ENCODE measurements at regions of chr7 and their contacts with region 1.

Region 1: GRCh38 chr7:100101016-100101862 is at the starts of genes AP4M1 and MCM7:
- DNase-seq: peak; percentile 84 to 98 (median 93)
- ATAC-seq: peak; percentile 90
- H3K4me3 ChIP-seq: peak within 1 kb of the TSS; percentile 98
- H3K4me3 Mint-ChIP-seq: peak within 1 kb of the TSS; percentile 85 to 95 (median 93)
- H3K27ac ChIP-seq: peak within 1 kb of the TSS; percentile 91
- H3K27ac Mint-ChIP-seq: peak within 1 kb of the TSS; percentile 90 to 98 (median 96)
- H3K4me1 ChIP-seq: peaks cover 17 to 25% of the 10 kb centered on the region in 2 donors
- H3K4me1 Mint-ChIP-seq: peaks cover 27 to 47% (median 41%) of the 10 kb centered on the region in 7 donors
- H3K27me3 ChIP-seq: no peaks in the 10 kb centered on the region
- H3K27me3 Mint-ChIP-seq: no peaks in the 10 kb centered on the region
- total RNA-seq, gene AP4M1: 7.5 to 13.8 (median 11.0) TPM
- total RNA-seq, gene MCM7: 80.3 to 263 (median 168) TPM

Region 2: GRCh38 chr7:99438573-99439480 is 662.4 kb before region 1 on chr7 and contains the starts of genes CPSF4 and PTCD1:
- CTCF ChIA-PET with region 1: no interaction called
- POLR2A ChIA-PET with region 1: no interaction called
- intact Hi-C with region 1: loop called in 1 of 2 experiments (anchors 1 kb)
- DNase-seq: peak; percentile 71 to 92 (median 77)
- ATAC-seq: peak; percentile 95
- H3K4me3 ChIP-seq: peak within 1 kb of the TSS; percentile 93
- H3K4me3 Mint-ChIP-seq: peak within 1 kb of the TSS; percentile 92 to 100 (median 98)
- H3K27ac ChIP-seq: peak within 1 kb of the TSS; percentile 81
- H3K27ac Mint-ChIP-seq: peak within 1 kb of the TSS; percentile 85 to 95 (median 94)
- H3K4me1 ChIP-seq: peaks cover 10 to 11% of the 10 kb centered on the region in 2 donors
- H3K4me1 Mint-ChIP-seq: peaks cover 18 to 40% (median 31%) of the 10 kb centered on the region in 7 donors
- H3K27me3 ChIP-seq: no peaks in the 10 kb centered on the region
- H3K27me3 Mint-ChIP-seq: no peaks in the 10 kb centered on the region
- total RNA-seq, gene CPSF4: 36.3 to 69.4 (median 45.7) TPM
- total RNA-seq, gene PTCD1: 4.0 to 10.8 (median 8.8) TPM

Region 3: DNA sequence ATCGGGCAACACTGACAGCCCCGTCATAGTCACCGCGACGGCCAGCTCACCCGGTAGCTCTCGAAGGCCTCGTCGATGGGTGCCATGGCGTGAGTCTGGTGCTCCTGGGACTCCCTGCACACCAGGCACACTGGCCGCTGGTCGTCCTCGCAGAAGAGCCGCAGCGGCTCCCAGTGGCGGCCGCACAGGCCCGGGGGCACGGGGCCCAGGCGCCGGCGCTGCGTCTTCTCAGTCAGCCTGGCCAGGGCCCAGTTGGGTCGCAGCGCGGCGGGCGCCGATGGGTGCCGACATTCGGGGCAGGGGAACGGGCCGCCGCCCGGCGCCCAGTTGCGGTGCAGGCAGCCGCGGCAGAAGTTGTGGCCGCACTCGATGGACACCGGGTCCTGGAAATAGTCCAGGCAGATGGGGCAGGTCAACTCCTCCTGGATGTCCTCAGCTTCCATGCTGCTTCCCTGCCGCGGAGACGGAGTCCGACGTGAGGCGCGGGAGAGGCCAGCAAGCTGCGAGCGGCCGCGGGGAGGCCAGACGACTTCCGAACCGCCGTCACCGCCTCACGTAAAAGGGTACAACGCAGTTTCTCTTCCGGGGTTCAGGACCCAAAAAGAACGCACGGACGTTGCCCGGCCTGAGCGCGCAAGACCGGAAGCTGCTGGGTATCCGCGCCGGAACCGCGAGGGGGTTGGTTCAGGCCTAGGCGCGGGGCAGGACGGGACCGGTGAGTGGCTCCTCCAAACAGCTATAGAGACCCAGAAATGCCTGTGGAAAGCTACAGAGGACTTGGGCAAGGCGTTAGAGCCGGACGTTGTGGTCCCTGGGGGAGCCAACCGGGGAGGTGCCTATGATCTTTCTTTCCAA is 182.1 kb before region 1 on chr7 and contains the start of gene TRIM4:
- CTCF ChIA-PET with region 1: no interaction called
- POLR2A ChIA-PET with region 1: interaction called, 13 read pairs
- intact Hi-C with region 1: loop called in 1 of 2 experiments (anchors 1 kb)
- DNase-seq: peak; percentile 76 to 92 (median 89)
- ATAC-seq: peak; percentile 98
- H3K4me3 ChIP-seq: peak within 1 kb of the TSS; percentile 68
- H3K4me3 Mint-ChIP-seq: peak within 1 kb of the TSS; percentile 87 to 98 (median 96)
- H3K27ac ChIP-seq: peak within 1 kb of the TSS; percentile 96
- H3K27ac Mint-ChIP-seq: peak within 1 kb of the TSS; percentile 96 to 99 (median 98)
- H3K4me1 ChIP-seq: peaks cover 36 to 37% of the 10 kb centered on the region in 2 donors
- H3K4me1 Mint-ChIP-seq: peaks cover 28 to 65% (median 54%) of the 10 kb centered on the region in 7 donors
- H3K27me3 ChIP-seq: no peaks in the 10 kb centered on the region
- H3K27me3 Mint-ChIP-seq: peaks cover 0 to 2% (median 0%) of the 10 kb centered on the region in 5 donors
- total RNA-seq, gene TRIM4: 30.1 to 75.0 (median 37.6) TPM

Region 4: DNA sequence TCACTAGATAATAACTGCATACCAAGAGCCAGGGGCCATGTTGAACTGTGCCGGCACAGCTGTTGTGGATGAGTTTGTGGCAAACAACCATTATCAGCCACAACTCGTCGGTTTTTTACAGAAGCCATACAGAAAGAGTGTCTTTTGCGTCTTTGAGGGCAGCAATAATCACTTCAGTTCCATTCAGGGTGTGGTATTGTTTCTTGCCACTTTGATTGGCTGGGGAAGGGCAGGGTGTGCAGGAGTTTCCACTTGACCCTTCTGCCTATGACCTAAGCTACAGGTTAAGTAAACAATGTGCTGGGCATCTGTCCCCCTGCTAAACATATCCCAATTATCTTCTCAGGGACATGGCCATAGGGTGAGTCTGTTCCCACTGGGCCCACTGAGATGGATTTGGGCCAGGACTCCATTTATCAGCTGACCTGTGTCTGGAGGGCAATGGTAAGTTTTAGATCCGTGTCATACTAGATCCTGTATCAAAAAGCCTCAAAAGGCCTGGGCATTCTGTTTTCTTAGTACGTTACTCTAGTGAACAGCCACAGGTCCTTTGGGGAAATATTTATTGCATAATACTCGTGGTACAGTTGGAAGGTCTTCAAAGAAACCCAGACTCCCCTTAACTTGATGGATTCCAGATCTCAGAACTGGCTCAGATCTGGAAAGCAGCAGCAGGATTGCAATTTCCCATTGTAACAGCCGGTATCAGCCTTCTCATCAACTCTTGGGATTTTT is 35.6 kb before region 1 on chr7:
- CTCF ChIA-PET with region 1: no interaction called
- POLR2A ChIA-PET with region 1: no interaction called
- intact Hi-C with region 1: no loop called
- DNase-seq: no peak
- ATAC-seq: no peak
- H3K4me3 ChIP-seq: no peak overlapping the region
- H3K4me3 Mint-ChIP-seq: no peak overlapping the region
- H3K27ac ChIP-seq: no peak overlapping the region
- H3K27ac Mint-ChIP-seq: peak overlapping the region in 1 of 9 donors; percentile 48
- H3K4me1 ChIP-seq: no peaks in the 10 kb centered on the region
- H3K4me1 Mint-ChIP-seq: peaks cover 0 to 2% (median 0%) of the 10 kb centered on the region in 7 donors
- H3K27me3 ChIP-seq: no peaks in the 10 kb centered on the region
- H3K27me3 Mint-ChIP-seq: no peaks in the 10 kb centered on the region

Region 5: GRCh38 chr7:100088621-100089457 is 12.4 kb before region 1 on chr7 and contains the start of gene COPS6:
- CTCF ChIA-PET with region 1: interaction called, 6 read pairs
- POLR2A ChIA-PET with region 1: interaction called, 59 read pairs
- intact Hi-C with region 1: loop called (anchors 1 kb)
- DNase-seq: peak; percentile 78 to 96 (median 86)
- ATAC-seq: peak; percentile 95
- H3K4me3 ChIP-seq: peak within 1 kb of the TSS; percentile 61
- H3K4me3 Mint-ChIP-seq: peak within 1 kb of the TSS; percentile 82 to 96 (median 90)
- H3K27ac ChIP-seq: peak within 1 kb of the TSS; percentile 87
- H3K27ac Mint-ChIP-seq: peak within 1 kb of the TSS; percentile 89 to 96 (median 94)
- H3K4me1 ChIP-seq: peaks cover 6 to 11% of the 10 kb centered on the region in 2 donors
- H3K4me1 Mint-ChIP-seq: peaks cover 11 to 40% (median 20%) of the 10 kb centered on the region in 7 donors
- H3K27me3 ChIP-seq: no peaks in the 10 kb centered on the region
- H3K27me3 Mint-ChIP-seq: peaks cover 0 to 12% (median 0%) of the 10 kb centered on the region in 5 donors
- total RNA-seq, gene COPS6: 65.7 to 103 (median 80.1) TPM

Region 6: DNA sequence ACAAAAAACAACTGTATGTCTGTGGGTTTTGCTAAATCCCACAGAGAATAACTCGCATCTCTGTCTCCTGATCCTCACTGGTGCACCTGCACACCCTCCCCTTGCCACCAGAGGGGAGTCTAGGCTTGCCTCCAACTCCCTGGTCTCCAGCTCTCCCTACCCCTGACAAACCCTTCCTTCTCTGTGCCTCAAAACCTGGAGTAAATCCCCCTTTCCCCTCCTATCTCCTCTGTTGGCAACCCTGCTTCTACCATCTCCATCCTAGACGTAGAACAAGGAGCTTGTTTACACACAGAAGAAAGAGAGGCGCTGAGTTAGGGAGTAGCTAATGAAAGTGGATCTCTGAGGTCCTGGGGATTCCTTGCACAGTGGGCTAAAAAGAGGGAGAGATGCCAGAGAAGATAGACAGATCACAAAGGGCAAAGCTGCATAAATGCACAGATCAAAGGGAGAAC is 31.5 kb after region 1 on chr7:
- CTCF ChIA-PET with region 1: interaction called, 4 read pairs
- POLR2A ChIA-PET with region 1: interaction called, 13 read pairs
- intact Hi-C with region 1: loop called (anchors 1 kb)
- DNase-seq: peak in 8 of 9 donors; percentile 53 to 77 (median 64)
- ATAC-seq: peak; percentile 89
- H3K4me3 ChIP-seq: no peak overlapping the region
- H3K4me3 Mint-ChIP-seq: no peak overlapping the region
- H3K27ac ChIP-seq: no peak overlapping the region
- H3K27ac Mint-ChIP-seq: peak overlapping the region in 7 of 9 donors; percentile 24 to 73 (median 49)
- H3K4me1 ChIP-seq: peaks cover 13 to 24% of the 10 kb centered on the region in 2 donors
- H3K4me1 Mint-ChIP-seq: peaks cover 4 to 31% (median 23%) of the 10 kb centered on the region in 7 donors
- H3K27me3 ChIP-seq: no peaks in the 10 kb centered on the region
- H3K27me3 Mint-ChIP-seq: no peaks in the 10 kb centered on the region

Region 7: GRCh38 chr7:100177045-100178001 is 76.1 kb after region 1 on chr7 and contains the starts of genes GPC2 and STAG3:
- CTCF ChIA-PET with region 1: no interaction called
- POLR2A ChIA-PET with region 1: interaction called, 4 read pairs
- intact Hi-C with region 1: loop called in 1 of 2 experiments (anchors 1 kb)
- DNase-seq: peak; percentile 95 to 99 (median 98)
- ATAC-seq: peak; percentile 97
- H3K4me3 ChIP-seq: peak within 1 kb of the TSS; percentile 70
- H3K4me3 Mint-ChIP-seq: peak within 1 kb of the TSS; percentile 76 to 84 (median 80)
- H3K27ac ChIP-seq: peak within 1 kb of the TSS; percentile 76
- H3K27ac Mint-ChIP-seq: peak within 1 kb of the TSS; percentile 42 to 92 (median 78)
- H3K4me1 ChIP-seq: peaks cover 7 to 28% of the 10 kb centered on the region in 2 donors
- H3K4me1 Mint-ChIP-seq: peaks cover 28 to 67% (median 52%) of the 10 kb centered on the region in 7 donors
- H3K27me3 ChIP-seq: no peaks in the 10 kb centered on the region
- H3K27me3 Mint-ChIP-seq: peaks cover 0 to 4% (median 0%) of the 10 kb centered on the region in 5 donors
- total RNA-seq, gene GPC2: 8.1 to 30.6 (median 18.2) TPM
- total RNA-seq, gene STAG3: 5.5 to 24.6 (median 9.5) TPM

Region 8: GRCh38 chr7:100705753-100706671 is 604.8 kb after region 1 on chr7 and contains the start of gene POP7:
- CTCF ChIA-PET with region 1: no interaction called
- POLR2A ChIA-PET with region 1: no interaction called
- intact Hi-C with region 1: loop called in 1 of 2 experiments (anchors 1 kb)
- DNase-seq: peak; percentile 95 to 99 (median 97)
- ATAC-seq: peak; percentile 97
- H3K4me3 ChIP-seq: peak within 1 kb of the TSS; percentile 85
- H3K4me3 Mint-ChIP-seq: peak within 1 kb of the TSS; percentile 88 to 97 (median 95)
- H3K27ac ChIP-seq: peak within 1 kb of the TSS; percentile 91
- H3K27ac Mint-ChIP-seq: peak within 1 kb of the TSS; percentile 88 to 96 (median 93)
- H3K4me1 ChIP-seq: peaks cover 9 to 12% of the 10 kb centered on the region in 2 donors
- H3K4me1 Mint-ChIP-seq: peaks cover 8 to 15% (median 13%) of the 10 kb centered on the region in 7 donors
- H3K27me3 ChIP-seq: no peaks in the 10 kb centered on the region
- H3K27me3 Mint-ChIP-seq: peaks cover 0 to 13% (median 3%) of the 10 kb centered on the region in 5 donors
- total RNA-seq, gene POP7: 8.9 to 38.2 (median 15.0) TPM